Activated B cell treated with CpG ODN at 0.5 μM for 24 hours (primary cell): ENCODE measurements at regions of chr1 and their contacts with region 1.

Region 1: GRCh38 chr1:205523891-205524793 is 19.7 kb downstream of the CDK18 start:
- DNase-seq: peak; percentile 67
- ATAC-seq: peak; percentile 69
- H3K4me3 Mint-ChIP-seq: no peak overlapping the region
- H3K27ac Mint-ChIP-seq: no peak overlapping the region
- H3K4me1 Mint-ChIP-seq: no peaks in the 10 kb centered on the region
- H3K27me3 Mint-ChIP-seq: peaks cover 6% of the 10 kb centered on the region
- CTCF ChIP-seq: no peak

Region 2: DNA sequence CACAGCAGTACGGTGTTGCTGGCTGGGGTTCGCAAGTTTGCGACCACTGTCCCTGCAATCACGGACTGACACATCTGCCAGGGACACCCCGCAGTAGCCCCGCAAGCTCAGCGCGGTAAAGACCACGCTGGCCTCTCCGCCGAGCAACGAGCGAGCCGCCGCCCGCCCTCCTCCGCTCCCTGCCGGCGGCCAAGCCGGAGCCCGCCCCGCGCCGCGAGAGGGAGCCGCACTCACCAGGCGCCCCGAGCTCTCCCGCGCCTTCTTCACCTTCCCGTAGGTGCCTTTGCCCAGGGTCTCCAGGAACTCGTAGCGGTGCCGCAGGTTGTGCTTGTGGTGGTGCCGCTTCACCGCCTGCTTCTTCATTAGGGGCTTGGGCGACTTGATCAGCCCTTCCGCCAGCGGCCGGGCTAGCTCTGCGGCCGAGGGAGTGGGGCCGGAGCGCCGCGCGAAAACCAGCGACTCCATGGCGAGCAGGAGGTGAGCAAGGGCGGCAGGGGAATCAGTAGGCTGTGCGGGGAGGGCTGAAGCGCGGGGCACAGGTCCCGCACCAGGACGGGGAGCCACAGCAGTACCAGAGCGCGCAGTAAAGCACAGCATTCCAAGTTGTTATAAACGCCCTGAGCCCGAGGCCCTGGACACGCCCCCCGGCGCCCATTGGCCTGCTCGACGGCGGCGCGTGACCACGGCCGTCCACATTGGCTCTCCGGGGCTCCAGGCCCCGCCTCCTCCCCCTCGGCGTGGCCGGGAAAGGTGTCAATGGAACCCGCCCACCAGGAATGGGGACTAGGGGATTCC is 202.8 kb before region 1 on chr1 and contains the start of gene NUAK2:
- CTCF ChIA-PET with region 1: interaction called, 26 read pairs
- POLR2A ChIA-PET with region 1: no interaction called
- intact Hi-C with region 1: no loop called
- DNase-seq: peak; percentile 83
- ATAC-seq: peak; percentile 86
- H3K4me3 Mint-ChIP-seq: peak within 1 kb of the TSS; percentile 97
- H3K27ac Mint-ChIP-seq: peak within 1 kb of the TSS; percentile 98
- H3K4me1 Mint-ChIP-seq: peaks cover 78% of the 10 kb centered on the region
- H3K27me3 Mint-ChIP-seq: peaks cover 2% of the 10 kb centered on the region
- CTCF ChIP-seq: no peak
- total RNA-seq, gene NUAK2: 26.1 and 26.2 TPM in 2 replicates

Region 3: DNA sequence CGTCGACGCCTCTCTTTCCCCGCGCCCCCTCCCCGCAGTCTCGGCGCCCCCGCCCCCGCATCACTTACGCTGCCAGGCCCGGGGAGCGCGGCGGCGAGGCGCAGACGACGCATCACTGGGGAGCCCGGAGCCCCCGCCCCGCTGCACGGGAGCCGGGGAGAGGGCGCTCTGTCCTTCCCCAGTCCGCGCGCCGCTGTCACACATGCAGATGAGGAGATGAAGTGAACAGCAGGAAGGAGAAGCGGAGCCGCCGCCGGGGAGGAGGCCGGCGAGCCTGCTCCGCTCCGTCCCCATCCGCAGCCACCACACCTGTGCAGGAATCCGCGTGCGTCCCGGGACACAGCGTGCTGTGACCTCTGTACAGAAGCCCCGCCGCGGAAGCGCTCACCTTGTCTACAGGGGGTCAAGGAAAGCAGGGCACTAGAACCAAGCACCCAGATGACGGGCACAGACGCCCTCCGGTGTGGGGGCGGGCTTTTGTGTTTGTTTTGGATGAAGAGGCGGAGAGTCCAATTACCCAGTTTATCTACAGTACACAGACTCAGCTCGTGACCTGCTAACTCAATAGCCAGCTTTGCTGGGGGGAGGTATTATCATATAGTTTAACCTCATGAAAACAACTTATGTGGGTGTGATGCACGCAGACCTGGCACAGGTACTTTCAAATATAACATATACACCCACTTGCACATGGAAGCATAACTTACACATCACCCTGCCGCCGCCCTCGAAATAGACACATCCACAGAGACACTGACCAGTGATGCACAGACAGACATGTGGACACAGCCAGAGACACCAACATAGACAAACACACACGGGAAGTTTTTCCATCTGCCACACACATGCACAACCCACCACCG is 179.8 kb before region 1 on chr1:
- CTCF ChIA-PET with region 1: interaction called, 14 read pairs
- POLR2A ChIA-PET with region 1: no interaction called
- intact Hi-C with region 1: no loop called
- DNase-seq: peak; percentile 49
- ATAC-seq: peak; percentile 59
- H3K4me3 Mint-ChIP-seq: peak overlapping the region; percentile 74
- H3K27ac Mint-ChIP-seq: no peak overlapping the region
- H3K4me1 Mint-ChIP-seq: peaks cover 40% of the 10 kb centered on the region
- H3K27me3 Mint-ChIP-seq: peaks cover 11% of the 10 kb centered on the region
- CTCF ChIP-seq: no peak

Region 4: GRCh38 chr1:205396967-205397616 is 127.0 kb before region 1 on chr1:
- CTCF ChIA-PET with region 1: interaction called, 42 read pairs
- POLR2A ChIA-PET with region 1: no interaction called
- intact Hi-C with region 1: loop called (anchors 1 kb)
- DNase-seq: no peak
- ATAC-seq: peak; percentile 52
- H3K4me3 Mint-ChIP-seq: no peak overlapping the region
- H3K27ac Mint-ChIP-seq: no peak overlapping the region
- H3K4me1 Mint-ChIP-seq: no peaks in the 10 kb centered on the region
- H3K27me3 Mint-ChIP-seq: peaks cover 12% of the 10 kb centered on the region
- CTCF ChIP-seq: no peak

Region 5: DNA sequence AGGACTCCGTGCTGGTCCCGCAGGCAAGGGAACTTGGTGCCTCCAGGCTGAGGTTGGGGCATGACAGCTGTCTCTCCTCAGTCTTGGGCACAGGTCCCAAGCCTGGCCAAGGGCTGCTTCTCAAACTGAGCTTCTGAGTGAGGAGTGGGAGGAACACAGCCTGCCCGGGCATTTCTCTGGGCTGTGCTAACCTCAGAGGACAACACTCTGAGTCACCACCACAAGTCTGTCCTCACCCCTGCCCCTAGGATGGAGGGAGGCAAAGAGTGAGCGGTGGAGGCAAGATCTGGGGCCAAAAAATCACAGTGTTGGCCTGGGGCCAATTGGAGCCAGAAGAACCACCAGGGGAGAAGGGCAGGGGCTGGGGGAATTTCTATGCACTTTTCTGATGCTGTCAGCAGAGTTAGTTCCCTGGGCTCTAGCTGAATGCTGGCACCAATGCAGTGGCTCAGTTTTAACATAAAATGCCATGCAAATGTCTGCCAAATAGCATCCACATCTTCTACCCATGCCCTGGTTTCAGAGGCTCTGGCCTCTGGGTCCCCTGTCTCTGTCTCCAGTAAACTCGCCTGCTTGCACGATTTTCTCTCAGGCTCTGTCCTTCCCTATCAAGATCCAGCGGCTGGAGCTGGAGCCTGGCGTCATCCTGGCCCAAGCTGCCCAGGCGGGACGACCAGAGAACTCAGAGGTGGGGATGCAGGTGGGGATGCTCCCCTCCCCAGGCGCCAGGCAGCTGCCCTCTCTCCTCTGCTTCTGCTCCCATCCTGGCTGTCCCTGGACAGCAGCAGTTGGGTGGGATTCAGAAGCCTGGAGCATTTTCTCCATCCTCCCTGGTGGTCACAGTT is 30.7 kb before region 1 on chr1:
- CTCF ChIA-PET with region 1: interaction called, 196 read pairs
- POLR2A ChIA-PET with region 1: no interaction called
- intact Hi-C with region 1: loop called (anchors 1 kb)
- DNase-seq: no peak
- ATAC-seq: no peak
- H3K4me3 Mint-ChIP-seq: no peak overlapping the region
- H3K27ac Mint-ChIP-seq: no peak overlapping the region
- H3K4me1 Mint-ChIP-seq: no peaks in the 10 kb centered on the region
- H3K27me3 Mint-ChIP-seq: peaks cover 51% of the 10 kb centered on the region
- CTCF ChIP-seq: no peak

Region 6: DNA sequence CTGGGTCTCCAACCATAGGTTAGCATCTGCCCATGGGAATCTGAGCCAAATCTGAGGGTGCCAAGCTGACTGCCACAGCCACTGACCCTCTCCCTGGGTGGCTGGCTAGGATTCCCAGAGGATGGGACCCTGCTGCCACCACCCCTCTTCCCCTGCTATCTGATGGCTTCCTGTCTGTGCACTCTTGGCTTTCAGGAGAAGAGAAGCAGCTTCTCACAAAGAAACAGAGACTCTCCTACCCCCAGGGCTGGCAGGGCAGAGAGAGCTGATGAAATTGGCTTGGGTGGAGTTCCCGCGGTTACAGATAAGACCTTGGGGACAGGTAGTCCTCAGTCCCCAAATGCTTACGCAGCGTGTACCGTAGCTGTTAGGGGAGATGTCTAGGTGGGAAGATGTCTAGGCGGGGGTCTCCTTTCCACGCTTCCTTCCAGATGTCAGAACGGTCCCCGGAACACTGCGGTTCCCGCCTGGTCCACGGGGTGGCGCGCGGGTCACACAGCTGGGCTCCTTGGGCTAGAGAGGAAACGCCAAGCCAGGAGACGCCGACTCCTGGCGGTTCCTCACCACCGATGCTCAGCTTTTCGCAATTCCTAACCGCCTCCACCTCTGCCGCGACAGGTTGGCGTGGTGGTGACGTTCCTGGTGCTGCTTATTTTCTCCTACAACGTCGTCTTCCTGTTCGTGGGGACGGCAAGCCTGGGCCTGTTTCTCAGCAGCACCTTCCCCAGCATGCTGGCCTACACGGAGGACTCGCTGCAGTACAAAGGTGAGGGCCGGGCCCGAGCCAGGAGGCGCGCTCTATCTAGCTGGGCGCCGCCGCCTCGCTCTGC is 67.6 kb after region 1 on chr1:
- CTCF ChIA-PET with region 1: interaction called, 35 read pairs
- POLR2A ChIA-PET with region 1: no interaction called
- intact Hi-C with region 1: loop called (anchors 1 kb)
- DNase-seq: peak; percentile 89
- ATAC-seq: peak; percentile 89
- H3K4me3 Mint-ChIP-seq: peak overlapping the region; percentile 90
- H3K27ac Mint-ChIP-seq: peak overlapping the region; percentile 90
- H3K4me1 Mint-ChIP-seq: peaks cover 48% of the 10 kb centered on the region
- H3K27me3 Mint-ChIP-seq: no peaks in the 10 kb centered on the region
- CTCF ChIP-seq: peak; percentile 87